Heart left ventricle (tissue), 16 donors: ENCODE measurements at regions of chr1 and their contacts with region 1.

Region 1: DNA sequence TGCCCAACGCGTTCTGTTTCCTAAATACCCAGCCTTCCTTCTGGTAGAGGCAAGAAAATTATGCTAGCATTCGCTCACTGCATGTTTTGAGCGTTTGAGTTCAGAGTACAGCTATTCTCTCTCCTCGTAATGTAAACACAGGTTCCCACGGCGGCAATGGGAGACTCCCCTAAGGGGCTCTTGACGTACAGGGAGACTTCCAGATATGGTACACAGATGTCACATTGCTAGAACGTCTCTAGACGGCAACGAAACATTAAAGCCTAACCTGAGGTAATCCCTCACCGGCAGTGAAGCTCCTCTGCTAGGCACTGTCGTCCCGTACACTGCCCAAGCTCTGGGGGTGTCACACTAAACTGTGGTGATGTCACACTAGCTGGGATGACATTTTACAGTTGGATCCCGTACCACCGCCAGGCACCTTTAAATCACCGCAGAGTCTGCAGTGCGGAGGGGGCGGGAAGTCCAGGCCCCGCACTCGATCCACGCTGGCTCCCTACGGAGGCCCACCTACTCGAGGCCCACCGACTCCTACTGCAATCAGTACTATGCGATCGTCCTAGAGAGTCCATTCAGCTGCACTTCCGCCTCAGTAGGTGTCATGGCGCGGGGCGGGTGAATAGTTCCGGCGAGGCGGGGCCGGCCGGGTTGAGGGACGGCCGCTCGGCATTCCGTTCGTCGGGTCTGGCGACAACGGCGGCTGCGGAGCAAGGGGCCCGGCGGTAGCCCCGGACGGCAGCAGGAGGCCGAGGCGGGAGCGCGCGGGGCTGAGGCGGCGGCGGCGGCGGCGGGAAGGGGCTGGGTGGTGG is at the start of gene HIPK1:
- DNase-seq: peak; percentile 94 to 96 (median 96)
- ATAC-seq: peak; percentile 95 to 96 (median 96)
- H3K4me3 ChIP-seq: peak within 1 kb of the TSS; percentile 73 to 99 (median 94)
- H3K27ac ChIP-seq: peak within 1 kb of the TSS; percentile 62 to 98 (median 95)
- H3K4me1 ChIP-seq: peaks cover 6 to 52% (median 37%) of the 10 kb centered on the region in 12 donors
- H3K27me3 ChIP-seq: no peaks in the 10 kb centered on the region
- CTCF ChIP-seq: no peak
- POLR2A ChIP-seq: peak in 1 of 2 donors; percentile 68
- total RNA-seq, gene HIPK1: 41.8 to 102 (median 62.7) TPM

Region 2: GRCh38 chr1:113874012-113874879 is 54.9 kb before region 1 on chr1:
- intact Hi-C with region 1: no loop called
- DNase-seq: no peak
- ATAC-seq: no peak
- H3K4me3 ChIP-seq: no peak overlapping the region
- H3K27ac ChIP-seq: peak overlapping the region in 1 of 12 donors; percentile 91
- H3K4me1 ChIP-seq: peaks cover 0 to 35% (median 0%) of the 10 kb centered on the region in 12 donors
- H3K27me3 ChIP-seq: no peaks in the 10 kb centered on the region
- CTCF ChIP-seq: no peak
- POLR2A ChIP-seq: no peak

Region 3: GRCh38 chr1:113912594-113913311 is 16.4 kb before region 1 on chr1:
- intact Hi-C with region 1: loop called in 3 of 10 experiments (anchors 1 to 2 kb)
- DNase-seq: peak; percentile 45 to 66 (median 54)
- ATAC-seq: peak; percentile 80 to 91 (median 86)
- H3K4me3 ChIP-seq: peak overlapping the region in 2 of 12 donors; percentile 3 to 21
- H3K27ac ChIP-seq: peak overlapping the region; percentile 51 to 89 (median 72)
- H3K4me1 ChIP-seq: peaks cover 3 to 18% (median 14%) of the 10 kb centered on the region in 12 donors
- H3K27me3 ChIP-seq: no peaks in the 10 kb centered on the region
- CTCF ChIP-seq: no peak
- POLR2A ChIP-seq: no peak

Region 4: DNA sequence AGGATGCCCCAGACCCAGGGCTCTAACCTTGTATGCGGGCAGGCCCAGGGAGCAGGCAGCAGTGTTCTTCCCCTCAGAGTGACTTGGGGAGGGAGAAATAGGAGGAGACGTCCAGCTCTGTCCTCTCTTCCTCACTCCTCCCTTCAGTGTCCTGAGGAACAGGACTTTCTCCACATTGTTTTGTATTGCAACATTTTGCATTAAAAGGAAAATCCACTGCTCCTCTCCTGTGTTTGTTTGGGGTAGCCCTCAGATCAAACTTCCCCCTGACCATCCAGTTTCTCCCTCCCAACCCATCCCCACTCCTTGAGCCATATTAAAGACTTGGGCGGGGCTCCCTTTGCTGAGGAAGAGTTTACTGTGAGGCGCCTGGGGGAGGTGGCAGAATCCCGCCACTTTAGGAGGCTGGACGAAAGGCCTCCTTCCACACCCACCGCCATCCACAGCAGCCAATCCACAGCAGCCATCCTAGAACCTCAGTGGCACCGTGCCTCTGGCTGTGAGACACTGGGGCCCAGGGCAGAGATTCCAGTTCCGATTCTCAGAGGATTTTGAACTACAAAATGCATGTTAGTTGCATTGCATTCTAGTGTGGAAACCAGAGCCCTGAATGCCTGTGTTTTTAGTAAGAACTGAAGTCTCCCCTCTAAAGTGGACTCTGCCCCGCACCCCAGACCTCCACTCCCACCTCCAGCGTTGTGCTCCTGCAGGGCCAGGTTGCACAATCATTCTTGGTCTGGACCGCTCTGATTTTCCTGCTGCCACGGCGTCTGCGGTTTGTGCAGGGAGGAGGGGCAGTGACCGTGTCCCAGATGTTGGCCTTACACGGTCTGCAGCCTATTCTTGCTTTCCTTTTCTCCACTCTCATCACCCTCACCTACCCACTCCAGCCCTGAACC is 53.1 kb after region 1 on chr1:
- intact Hi-C with region 1: no loop called
- DNase-seq: peak; percentile 57 to 79 (median 74)
- ATAC-seq: peak; percentile 43 to 77 (median 61)
- H3K4me3 ChIP-seq: peak overlapping the region in 10 of 12 donors; percentile 1 to 51 (median 30)
- H3K27ac ChIP-seq: peak overlapping the region in 11 of 12 donors; percentile 9 to 86 (median 52)
- H3K4me1 ChIP-seq: peaks cover 0 to 67% (median 20%) of the 10 kb centered on the region in 12 donors
- H3K27me3 ChIP-seq: no peaks in the 10 kb centered on the region
- CTCF ChIP-seq: no peak
- POLR2A ChIP-seq: no peak